Heart right ventricle (tissue), 16 donors: ENCODE measurements at regions of chr3 and their contacts with region 1.

Region 1: DNA sequence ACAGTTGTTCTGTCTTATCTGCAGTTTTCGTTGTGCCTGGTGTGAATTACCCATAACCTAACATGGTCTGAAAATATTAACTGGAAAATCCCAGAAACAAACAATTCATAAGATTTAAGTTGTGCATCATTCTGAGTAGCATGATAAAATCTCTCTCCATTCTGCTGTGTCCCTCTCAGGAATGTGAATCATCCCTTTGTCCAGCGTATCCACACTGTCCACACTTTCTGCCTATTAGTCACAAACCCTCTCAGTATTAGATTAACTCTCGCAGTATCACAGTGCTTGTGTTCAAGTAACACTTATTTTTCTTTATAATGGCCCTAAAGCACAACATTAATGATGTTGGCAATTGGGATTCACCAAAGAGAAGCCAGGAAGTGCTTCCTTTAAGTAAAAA is 203.2 kb downstream of the CGGBP1 start:
- DNase-seq: no peak
- ATAC-seq: no peak
- H3K4me3 ChIP-seq: no peak overlapping the region
- H3K27ac ChIP-seq: no peak overlapping the region
- H3K4me1 ChIP-seq: peaks cover 0 to 4% (median 0%) of the 10 kb centered on the region in 9 donors
- H3K27me3 ChIP-seq: no peaks in the 10 kb centered on the region
- CTCF ChIP-seq: no peak

Region 2: GRCh38 chr3:87780811-87781210 is 74.8 kb before region 1 on chr3:
- intact Hi-C with region 1: loop called in 1 of 10 experiments (anchors 10 kb)
- DNase-seq: no peak
- ATAC-seq: no peak
- H3K4me3 ChIP-seq: no peak overlapping the region
- H3K27ac ChIP-seq: no peak overlapping the region
- H3K4me1 ChIP-seq: no peaks in the 10 kb centered on the region
- H3K27me3 ChIP-seq: no peaks in the 10 kb centered on the region
- CTCF ChIP-seq: no peak